GM13976 (cell line): ENCODE measurements at regions of chr2 and their contacts with region 1.

Region 1: GRCh38 chr2:105114551-105114950 is 76.7 kb downstream of the MRPS9 start:
- DNase-seq: peak; percentile 75
- CTCF ChIP-seq: peak; percentile 43

Region 2: DNA sequence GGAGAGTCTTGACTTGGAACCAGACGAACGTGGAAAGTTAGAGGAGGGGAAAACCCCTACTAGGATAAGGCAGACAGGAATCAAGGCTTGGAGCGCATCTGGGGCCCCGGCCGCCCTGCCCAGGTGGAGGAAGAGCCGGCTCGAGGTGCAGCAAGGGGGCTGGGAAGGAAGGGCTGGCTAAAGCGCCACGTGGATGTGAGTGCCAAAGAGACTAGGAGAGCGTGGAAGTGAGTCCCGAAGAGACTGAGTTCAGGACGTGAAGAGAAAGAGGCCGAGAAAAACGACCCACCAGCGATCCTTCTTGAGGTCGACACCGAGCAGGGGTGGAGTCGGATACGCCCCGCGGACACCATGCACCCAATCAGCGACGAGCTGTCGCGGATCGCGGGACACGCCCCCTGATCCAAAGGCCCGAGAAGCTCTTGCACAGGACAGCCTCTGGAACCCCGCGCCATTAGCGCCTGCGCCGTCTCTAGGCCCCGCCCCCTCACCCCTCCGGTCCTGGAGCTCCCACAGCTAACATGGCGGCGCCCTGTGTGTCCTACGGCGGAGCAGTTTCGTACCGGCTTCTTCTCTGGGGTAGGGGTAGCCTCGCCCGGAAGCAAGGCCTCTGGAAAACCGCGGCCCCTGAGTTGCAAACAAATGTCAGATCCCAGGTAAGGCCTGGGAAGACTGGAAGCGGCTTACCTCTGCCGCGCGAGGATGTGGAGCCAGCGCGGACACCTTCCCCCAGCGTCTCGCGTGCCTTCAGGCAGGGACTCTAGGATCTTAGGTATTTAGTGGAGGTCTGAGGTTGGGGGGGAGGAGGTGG is 76.8 kb before region 1 on chr2 and contains the start of gene MRPS9:
- in situ Hi-C with region 1: no loop called
- DNase-seq: peak; percentile 96
- CTCF ChIP-seq: no peak

Region 3: GRCh38 chr2:105220604-105221003 is 106.1 kb after region 1 on chr2:
- in situ Hi-C with region 1: loop called (anchors 5 kb)
- DNase-seq: no peak
- CTCF ChIP-seq: no peak